ENCODE measurements at regions of chr11 and their contacts with region 1.

Region 1: DNA sequence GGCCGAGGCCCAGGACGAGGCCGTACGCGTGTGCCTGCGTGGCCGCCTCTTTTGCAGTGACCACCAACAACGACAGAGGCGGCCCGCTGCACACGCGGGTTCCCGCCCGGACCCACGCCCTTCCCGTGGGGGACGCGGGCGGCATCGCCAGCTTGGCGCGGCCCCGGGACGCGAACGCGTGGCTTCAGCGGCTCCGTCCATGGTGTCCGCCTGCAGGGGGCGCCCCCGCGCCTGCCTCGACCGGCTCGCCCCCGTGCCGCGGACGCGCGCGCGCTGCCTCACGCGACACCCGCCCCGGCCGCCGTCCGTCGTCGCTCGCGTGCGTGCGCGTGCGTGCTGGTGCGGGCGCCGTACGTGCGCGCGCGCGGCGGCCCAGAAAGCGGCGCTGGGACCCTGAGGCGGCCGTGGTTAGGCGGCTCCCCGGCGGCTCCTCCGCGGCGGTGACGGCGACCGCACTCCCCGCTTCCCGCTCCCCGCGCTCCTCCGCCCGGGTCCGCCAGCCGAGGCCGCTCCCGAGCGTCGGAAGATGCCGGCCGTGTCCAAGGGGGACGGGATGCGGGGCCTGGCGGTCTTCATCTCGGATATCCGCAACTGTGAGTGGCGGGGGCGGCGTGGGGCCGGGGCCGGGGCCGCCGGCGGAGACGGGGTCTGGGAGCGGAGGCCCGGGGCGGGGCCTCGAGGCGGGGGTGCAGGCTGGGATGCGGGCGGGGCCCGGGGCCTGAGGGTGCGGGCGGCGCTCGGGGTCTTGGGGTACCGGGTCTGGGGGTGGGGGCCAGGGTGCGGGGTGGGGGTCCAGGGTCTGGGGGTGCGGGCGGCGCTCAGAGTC is at the start of gene AP2A2:
- DNase-seq: peak; percentile 93 to 98 (median 97)
- ATAC-seq: peak; percentile 82 to 89
- H3K4me3 ChIP-seq: peak within 1 kb of the TSS; percentile 98
- H3K27ac ChIP-seq: peak within 1 kb of the TSS; percentile 93
- H3K4me1 ChIP-seq: peaks cover 5% of the 10 kb centered on the region
- H3K27me3 ChIP-seq: no peaks in the 10 kb centered on the region
- total RNA-seq, gene AP2A2: 45.8 to 55.0 (median 51.9) TPM

Region 2: DNA sequence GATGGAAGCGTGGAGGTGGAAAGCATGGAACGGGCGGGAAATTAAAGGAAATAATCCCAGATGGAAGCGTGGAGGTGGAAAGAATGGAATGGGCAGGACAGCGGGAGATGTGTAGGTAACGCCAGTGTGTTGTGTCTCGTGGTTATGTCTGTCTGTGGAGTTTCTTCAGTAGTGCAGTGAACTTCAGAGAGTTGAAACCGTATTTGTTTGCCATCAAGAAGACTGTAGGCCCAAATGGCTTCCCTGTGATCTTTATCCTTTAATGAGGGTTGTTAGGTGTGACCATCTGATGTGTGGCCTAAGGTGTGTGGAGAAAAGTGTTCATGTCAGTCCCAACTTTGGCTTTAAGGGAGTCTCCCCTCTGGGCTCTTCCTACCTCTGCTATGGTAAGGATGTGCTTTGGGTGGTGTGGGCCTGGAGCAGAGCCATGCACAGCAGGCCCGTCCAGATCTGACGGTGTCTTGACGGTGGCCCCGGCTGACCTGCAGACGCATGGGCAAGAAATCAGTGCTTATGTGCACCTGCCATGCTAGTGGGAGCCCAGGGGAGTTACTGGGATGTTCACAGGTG is 39.6 kb after region 1 on chr11:
- intact Hi-C with region 1: loop called in 1 of 4 experiments (anchors 5 kb)
- DNase-seq: no peak
- ATAC-seq: no peak
- H3K4me3 ChIP-seq: no peak overlapping the region
- H3K27ac ChIP-seq: no peak overlapping the region
- H3K4me1 ChIP-seq: no peaks in the 10 kb centered on the region
- H3K27me3 ChIP-seq: no peaks in the 10 kb centered on the region

Measured in right cardiac atrium (tissue), 5 donors.